Activated naive CD4-positive, alpha-beta T cell treated with anti-CD3 and anti-CD28 coated beads for 36 hours (primary cell): ENCODE measurements at regions of chr5 and their contacts with region 1.

Region 1: DNA sequence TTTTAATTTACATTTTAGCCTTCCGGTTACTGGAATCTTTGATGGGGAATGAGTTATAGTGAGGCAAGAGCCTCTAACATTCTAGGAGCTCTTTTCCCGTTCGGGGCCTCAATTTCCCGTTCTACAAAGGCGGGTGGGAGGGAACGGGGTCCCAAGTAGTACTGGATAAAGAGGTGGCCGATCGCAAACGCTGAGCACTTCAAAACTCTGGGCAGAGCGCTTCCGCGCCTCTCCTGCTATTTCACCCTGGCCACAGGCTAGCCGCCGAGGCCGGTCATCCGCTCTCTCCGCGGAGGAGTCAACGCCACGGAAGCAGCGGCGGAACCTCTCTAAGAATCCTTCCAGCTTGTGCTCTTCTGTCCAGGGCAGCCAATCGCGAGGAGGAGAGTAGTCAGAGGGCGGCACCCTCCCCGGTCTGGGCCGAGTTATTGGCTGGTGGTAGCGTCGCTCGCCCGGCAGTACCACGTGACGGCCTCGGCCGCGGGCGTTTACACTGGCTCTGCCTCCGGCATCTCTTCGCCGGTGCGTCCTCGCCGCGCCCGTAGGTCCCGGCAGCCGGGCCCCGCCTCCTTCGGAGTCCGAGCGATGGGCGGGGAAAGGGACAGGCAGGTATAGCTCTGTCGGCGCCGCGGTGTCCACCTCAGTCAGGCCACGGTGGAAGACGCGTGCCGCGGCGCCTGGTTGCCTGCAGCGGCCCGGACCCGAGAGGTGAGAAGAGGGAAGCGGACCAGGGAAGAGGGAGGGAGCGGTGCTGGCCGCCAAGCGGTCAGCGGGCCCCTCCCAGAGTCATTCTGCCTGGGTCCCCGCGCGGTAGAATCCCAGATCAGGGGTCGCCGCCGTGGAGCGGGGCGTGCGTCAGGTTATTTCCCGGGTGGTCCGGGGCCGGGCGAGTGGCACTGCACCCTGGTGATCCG is at the start of gene SLC26A2:
- DNase-seq: peak; percentile 97
- H3K4me3 Mint-ChIP-seq: peak within 1 kb of the TSS; percentile 98
- H3K27ac Mint-ChIP-seq: peak within 1 kb of the TSS; percentile 100
- H3K4me1 Mint-ChIP-seq: peaks cover 30% of the 10 kb centered on the region
- H3K27me3 Mint-ChIP-seq: no peaks in the 10 kb centered on the region
- total RNA-seq, gene SLC26A2: 3.5 to 3.7 TPM

Region 2: DNA sequence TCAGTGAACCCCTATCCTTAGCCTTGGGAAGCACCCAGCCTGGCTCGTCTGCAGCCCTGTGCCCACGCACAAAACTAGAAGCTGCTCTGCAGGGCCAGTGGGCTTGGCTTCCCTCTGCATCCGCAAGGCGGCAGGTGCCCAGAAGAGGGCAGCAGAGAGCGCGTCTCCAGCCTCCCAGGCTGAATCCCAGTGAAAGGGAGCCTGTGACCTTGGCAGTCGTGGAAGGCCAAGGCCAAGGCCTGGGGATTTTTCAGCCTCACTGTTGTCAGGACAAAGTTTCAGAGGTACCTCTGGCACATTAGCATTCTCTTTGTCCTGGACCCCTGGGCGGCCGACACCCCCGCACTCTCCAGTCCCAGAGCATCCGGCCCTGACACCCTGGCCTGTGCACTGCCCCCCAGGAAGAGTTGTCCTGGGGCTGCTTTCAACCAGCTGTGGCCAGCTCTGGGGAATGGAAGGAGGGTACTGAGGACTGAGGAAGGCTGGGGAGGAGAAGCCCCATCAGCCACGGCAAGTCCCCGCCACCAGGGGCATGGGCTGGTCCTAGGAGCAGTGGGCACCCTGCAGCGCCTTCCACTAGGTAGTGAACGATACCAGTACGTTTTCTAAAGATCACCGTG is 517.9 kb before region 1 on chr5:
- CTCF ChIA-PET with region 1: interaction called, 3 read pairs
- intact Hi-C with region 1: loop called (anchors 10 kb)
- DNase-seq: peak; percentile 82
- H3K4me3 Mint-ChIP-seq: no peak overlapping the region
- H3K27ac Mint-ChIP-seq: no peak overlapping the region
- H3K4me1 Mint-ChIP-seq: peaks cover 18% of the 10 kb centered on the region
- H3K27me3 Mint-ChIP-seq: no peaks in the 10 kb centered on the region

Region 3: DNA sequence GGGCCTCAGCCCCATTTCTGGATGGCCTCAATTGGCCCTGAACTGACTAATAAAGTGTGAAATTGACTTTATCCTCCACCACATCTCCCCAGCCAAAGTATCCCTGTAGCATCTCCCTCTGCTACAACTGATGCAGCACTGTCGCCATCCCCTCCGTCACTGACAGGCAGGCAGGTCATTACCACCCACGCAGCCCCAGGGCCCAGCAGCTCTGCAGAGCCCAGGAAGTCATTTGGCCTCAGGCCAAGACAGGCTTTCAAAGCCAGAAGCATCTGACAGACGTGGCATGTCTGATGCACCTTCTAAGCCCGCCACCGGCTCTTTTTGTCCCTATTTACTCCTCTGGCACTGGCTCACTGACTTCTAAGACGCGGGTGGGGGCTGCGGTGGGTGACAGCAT is 314.0 kb before region 1 on chr5:
- CTCF ChIA-PET with region 1: interaction called, 4 read pairs
- intact Hi-C with region 1: loop called (anchors 2 kb)
- DNase-seq: peak; percentile 60
- H3K4me3 Mint-ChIP-seq: no peak overlapping the region
- H3K27ac Mint-ChIP-seq: no peak overlapping the region
- H3K4me1 Mint-ChIP-seq: peaks cover 6% of the 10 kb centered on the region
- H3K27me3 Mint-ChIP-seq: no peaks in the 10 kb centered on the region

Region 4: DNA sequence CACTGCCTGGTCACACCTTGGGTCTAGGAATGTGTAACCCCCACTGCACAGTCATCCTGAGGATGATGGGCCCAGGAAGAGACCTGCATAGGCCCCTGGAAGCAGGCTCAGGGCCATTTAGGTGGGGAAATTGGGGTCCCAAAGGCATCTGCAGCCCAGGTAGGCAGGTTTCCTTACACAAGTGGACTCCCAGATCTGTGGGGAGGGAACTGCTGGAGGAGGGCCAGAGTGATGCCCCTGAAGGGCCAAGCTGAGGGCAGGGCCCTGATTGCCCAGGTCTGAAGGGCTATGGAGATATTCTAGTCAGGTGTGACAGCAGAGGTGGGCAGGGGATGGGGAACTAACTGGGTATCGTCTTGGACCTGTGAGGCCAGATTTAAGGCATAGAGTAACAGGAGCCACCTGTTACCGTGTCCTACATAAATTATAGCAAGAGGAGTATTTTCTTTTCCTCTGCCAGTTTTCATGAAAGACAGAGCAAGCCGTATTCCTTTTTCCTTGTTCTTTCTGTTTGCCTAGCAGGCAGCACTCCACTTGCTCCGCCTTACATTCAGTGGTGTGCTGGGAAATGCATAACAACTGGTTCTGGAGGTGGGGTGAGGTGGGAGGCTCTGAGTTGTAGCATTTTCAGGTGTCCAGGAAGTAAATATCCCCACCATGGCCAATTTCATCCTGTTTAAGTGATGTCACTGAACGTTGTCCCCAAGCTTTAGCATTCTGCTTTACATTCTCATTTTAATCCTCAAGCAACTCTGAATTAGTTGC is 189.1 kb before region 1 on chr5:
- CTCF ChIA-PET with region 1: no interaction called
- intact Hi-C with region 1: no loop called
- DNase-seq: no peak
- H3K4me3 Mint-ChIP-seq: no peak overlapping the region
- H3K27ac Mint-ChIP-seq: peak overlapping the region; percentile 51
- H3K4me1 Mint-ChIP-seq: peaks cover 8% of the 10 kb centered on the region
- H3K27me3 Mint-ChIP-seq: no peaks in the 10 kb centered on the region

Region 5: GRCh38 chr5:149852641-149853330 is 107.7 kb before region 1 on chr5:
- CTCF ChIA-PET with region 1: interaction called, 21 read pairs
- intact Hi-C with region 1: loop called (anchors 1 kb)
- DNase-seq: peak; percentile 70
- H3K4me3 Mint-ChIP-seq: no peak overlapping the region
- H3K27ac Mint-ChIP-seq: no peak overlapping the region
- H3K4me1 Mint-ChIP-seq: no peaks in the 10 kb centered on the region
- H3K27me3 Mint-ChIP-seq: no peaks in the 10 kb centered on the region

Region 6: GRCh38 chr5:149948667-149949372 is 11.7 kb before region 1 on chr5:
- CTCF ChIA-PET with region 1: interaction called, 21 read pairs
- intact Hi-C with region 1: no loop called
- DNase-seq: no peak
- H3K4me3 Mint-ChIP-seq: no peak overlapping the region
- H3K27ac Mint-ChIP-seq: no peak overlapping the region
- H3K4me1 Mint-ChIP-seq: no peaks in the 10 kb centered on the region
- H3K27me3 Mint-ChIP-seq: peaks cover 2% of the 10 kb centered on the region

Region 7: GRCh38 chr5:150092159-150092787 is 131.7 kb after region 1 on chr5:
- CTCF ChIA-PET with region 1: no interaction called
- intact Hi-C with region 1: loop called (anchors 1 kb)
- DNase-seq: no peak
- H3K4me3 Mint-ChIP-seq: no peak overlapping the region
- H3K27ac Mint-ChIP-seq: peak overlapping the region; percentile 79
- H3K4me1 Mint-ChIP-seq: peaks cover 15% of the 10 kb centered on the region
- H3K27me3 Mint-ChIP-seq: peaks cover 16% of the 10 kb centered on the region